GM10248 (cell line): ENCODE measurements at regions of chr22 and their contacts with region 1.

Region 1: GRCh38 chr22:17891481-17892167 is 117.4 kb upstream of the BID start:
- DNase-seq: peak; percentile 45
- CTCF ChIP-seq: peak; percentile 47

Region 2: DNA sequence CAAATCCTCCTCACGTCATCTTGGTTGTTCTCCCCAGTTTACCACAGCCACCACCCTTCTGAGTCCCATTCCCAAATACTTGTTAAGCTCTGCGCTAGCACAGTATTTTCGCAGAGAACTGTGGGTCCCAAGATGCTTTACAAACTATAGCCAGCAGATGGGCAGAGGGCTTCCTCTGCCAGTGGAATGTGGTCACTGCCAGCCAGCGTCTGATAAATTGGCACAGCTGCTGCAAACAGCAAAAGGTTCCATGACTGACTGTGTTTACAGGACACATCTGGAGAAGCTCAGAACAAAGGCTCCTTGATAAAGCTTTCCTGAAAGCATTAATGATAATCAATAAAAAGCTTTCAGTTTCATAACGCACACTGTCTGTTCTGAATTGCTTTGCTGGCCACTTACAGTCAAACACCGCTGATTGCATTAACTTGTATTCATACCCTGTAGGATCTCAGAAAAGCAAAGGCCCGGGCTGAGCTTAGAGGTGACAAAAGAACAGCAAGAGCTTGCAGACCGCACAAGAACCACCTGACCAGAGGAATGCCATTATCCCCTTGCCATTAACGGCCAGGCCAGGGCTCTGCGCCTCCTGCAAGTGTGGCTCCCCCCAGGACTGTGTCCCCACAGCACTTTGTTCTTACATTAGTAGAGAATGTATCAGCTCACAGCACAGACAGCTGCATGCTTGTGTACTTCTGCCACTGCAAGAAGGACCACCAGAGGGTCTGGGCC is 12.1 kb after region 1 on chr22:
- CTCF ChIA-PET with region 1: interaction called, 39 read pairs
- POLR2A ChIA-PET with region 1: no interaction called
- DNase-seq: no peak
- CTCF ChIP-seq: no peak